Esophagus muscularis mucosa (tissue), 4 donors: ENCODE measurements at regions of chr6 and their contacts with region 1.

Region 1: DNA sequence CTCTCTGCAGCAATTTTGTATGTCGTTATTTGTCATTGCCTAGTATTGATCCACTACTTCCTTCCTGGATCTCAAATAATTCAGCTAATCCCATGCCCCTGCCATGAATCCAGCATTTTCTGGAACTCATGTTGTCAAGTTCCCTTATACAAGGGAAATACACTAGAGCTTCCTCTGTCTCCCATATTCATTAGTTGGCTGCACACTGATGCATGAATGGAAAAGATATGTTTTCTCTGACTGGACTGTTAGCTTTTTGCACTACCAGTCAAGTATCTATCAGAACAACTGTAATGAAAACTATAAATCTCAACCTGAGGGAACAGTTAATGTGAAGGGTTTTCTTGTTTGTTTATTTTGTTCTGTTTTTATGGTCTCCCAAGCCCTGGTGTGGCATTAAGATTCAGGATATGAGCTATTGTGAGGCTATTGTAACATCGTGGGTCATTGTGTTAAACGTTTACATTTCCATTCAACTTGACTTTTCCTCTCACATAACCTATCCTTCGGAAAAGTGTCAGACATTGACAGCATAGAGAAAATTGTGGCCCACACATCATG is 102.5 kb upstream of the FAM8A1 start:
- DNase-seq: no peak
- H3K4me3 ChIP-seq: no peak overlapping the region
- H3K27ac ChIP-seq: no peak overlapping the region
- H3K4me1 ChIP-seq: peaks cover 7 to 50% (median 41%) of the 10 kb centered on the region in 4 donors
- H3K27me3 ChIP-seq: no peaks in the 10 kb centered on the region
- CTCF ChIP-seq: no peak
- EP300 ChIP-seq: no peak
- POLR2A ChIP-seq: no peak

Region 2: DNA sequence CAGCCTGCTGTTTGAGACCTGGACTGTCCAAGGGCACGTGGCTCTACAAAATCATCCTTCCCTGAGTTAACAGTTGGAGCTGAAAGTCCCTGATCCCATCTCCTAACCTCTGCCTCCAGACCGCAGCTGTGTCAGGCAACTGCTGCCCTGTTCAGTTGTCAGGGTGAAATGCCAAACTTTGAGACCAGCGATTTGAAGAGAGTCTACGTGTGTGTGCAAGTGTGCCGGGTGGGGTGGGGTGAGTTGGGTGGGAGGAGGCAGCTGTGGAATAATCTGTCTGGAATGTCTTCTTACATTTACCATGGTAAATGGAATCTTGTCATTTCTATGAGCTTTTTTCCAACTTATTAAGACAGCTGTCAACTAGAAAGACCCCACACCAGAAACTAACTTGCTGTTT is 21.5 kb after region 1 on chr6:
- intact Hi-C with region 1: loop called (anchors 2 kb)
- DNase-seq: peak; percentile 80
- H3K4me3 ChIP-seq: no peak overlapping the region
- H3K27ac ChIP-seq: no peak overlapping the region
- H3K4me1 ChIP-seq: no peaks in the 10 kb centered on the region
- H3K27me3 ChIP-seq: no peaks in the 10 kb centered on the region
- CTCF ChIP-seq: no peak
- EP300 ChIP-seq: no peak
- POLR2A ChIP-seq: no peak